ENCODE measurements at regions of chr12 and their contacts with region 1.

Region 1: GRCh38 chr12:62435303-62436163 is 31.1 kb upstream of the MON2 start:
- DNase-seq: peak; percentile 31 to 75
- H3K4me3 ChIP-seq: peak overlapping the region; percentile 37 to 71 (median 67)
- H3K27ac ChIP-seq: no peak overlapping the region
- H3K4me1 ChIP-seq: peaks cover 0 to 5% (median 0%) of the 10 kb centered on the region in 4 experiments; a peak in 4 of 7 replicates
- H3K27me3 ChIP-seq: peaks cover 8 to 25% (median 19%) of the 10 kb centered on the region in 4 experiments
- CTCF ChIP-seq: peak; percentile 54 to 79 (median 77)
- EP300 ChIP-seq: no peak
- POLR2A ChIP-seq: no peak
- RAD21 ChIP-seq: peak; percentile 48 to 58

Region 2: DNA sequence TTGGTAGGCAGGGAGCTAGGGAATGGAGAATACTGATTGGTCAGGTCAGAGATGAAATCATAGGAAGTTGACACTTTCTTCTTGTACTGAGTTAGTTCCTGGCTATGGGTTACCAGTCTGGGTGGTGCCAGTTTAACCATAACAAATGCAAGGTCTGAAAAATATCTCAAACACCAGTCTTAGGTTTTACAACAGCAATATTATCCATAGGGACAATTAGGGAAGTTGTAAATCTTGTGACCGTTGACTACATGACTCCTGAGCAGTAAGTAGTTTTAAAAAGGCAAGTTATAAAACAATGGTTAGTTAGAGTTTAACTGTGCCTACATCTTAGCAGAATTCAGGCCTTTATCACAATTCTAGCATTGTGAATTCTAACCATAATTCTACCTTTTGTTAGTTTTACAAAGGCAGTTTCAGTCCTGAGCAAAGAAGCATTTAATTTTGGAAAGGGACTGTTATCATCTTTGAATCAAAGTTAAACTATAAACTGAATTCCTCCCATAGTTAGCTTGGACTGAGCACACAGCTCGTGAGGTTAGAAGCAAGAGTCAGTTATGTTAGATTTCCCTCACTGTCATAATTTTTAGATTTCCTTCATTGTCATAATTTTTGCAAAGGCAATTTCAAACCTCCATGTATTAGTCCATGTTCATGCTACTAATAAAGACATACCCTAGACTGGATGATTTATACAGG is 11.4 kb after region 1 on chr12:
- CTCF ChIA-PET with region 1: interaction called, 13 read pairs
- POLR2A ChIA-PET with region 1: no interaction called
- DNase-seq: no peak
- H3K4me3 ChIP-seq: no peak overlapping the region
- H3K27ac ChIP-seq: no peak overlapping the region
- H3K4me1 ChIP-seq: no peaks in the 10 kb centered on the region
- H3K27me3 ChIP-seq: no peaks in the 10 kb centered on the region
- CTCF ChIP-seq: no peak
- EP300 ChIP-seq: no peak
- POLR2A ChIP-seq: no peak
- RAD21 ChIP-seq: no peak

Region 3: DNA sequence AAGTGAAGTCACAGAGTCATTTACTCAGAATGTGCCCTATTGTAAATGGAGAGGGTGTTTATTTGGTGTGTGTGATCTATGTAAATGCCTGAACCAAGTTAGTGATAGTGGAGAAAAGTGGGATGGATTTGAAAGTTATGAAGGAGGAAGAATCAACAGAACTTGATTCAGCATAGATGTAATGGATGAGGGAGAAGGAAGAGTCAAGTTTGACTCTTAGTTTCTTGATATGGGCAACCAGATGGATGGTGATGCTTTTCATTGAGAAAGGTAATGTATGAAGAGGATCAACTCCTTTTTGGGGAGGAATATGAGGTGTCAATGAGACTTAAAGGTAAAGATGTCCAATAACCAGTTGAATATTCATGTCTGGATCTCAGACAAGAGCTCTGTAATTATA is 24.4 kb after region 1 on chr12:
- CTCF ChIA-PET with region 1: interaction called, 15 read pairs
- POLR2A ChIA-PET with region 1: no interaction called
- DNase-seq: no peak
- H3K4me3 ChIP-seq: no peak overlapping the region
- H3K27ac ChIP-seq: no peak overlapping the region
- H3K4me1 ChIP-seq: no peaks in the 10 kb centered on the region
- H3K27me3 ChIP-seq: no peaks in the 10 kb centered on the region
- CTCF ChIP-seq: no peak
- EP300 ChIP-seq: no peak
- POLR2A ChIP-seq: no peak
- RAD21 ChIP-seq: no peak

Region 4: GRCh38 chr12:62919838-62920237 is 484.3 kb after region 1 on chr12:
- CTCF ChIA-PET with region 1: no interaction called
- POLR2A ChIA-PET with region 1: no interaction called
- DNase-seq: no peak
- H3K4me3 ChIP-seq: no peak overlapping the region
- H3K27ac ChIP-seq: no peak overlapping the region
- H3K4me1 ChIP-seq: peaks cover 2 to 17% (median 15%) of the 10 kb centered on the region in 4 experiments
- H3K27me3 ChIP-seq: no peaks in the 10 kb centered on the region
- CTCF ChIP-seq: no peak
- EP300 ChIP-seq: no peak
- POLR2A ChIP-seq: no peak
- RAD21 ChIP-seq: no peak

Measured in H1 (cell line).